SK-N-SH (cell line): ENCODE measurements at regions of chr7 and their contacts with region 1.

Region 1: GRCh38 chr7:3300651-3301378 is at the start of gene SDK1:
- DNase-seq: peak; percentile 98
- H3K4me3 ChIP-seq: peak within 1 kb of the TSS; percentile 62 to 63
- H3K27ac ChIP-seq: peak within 1 kb of the TSS in 1 of 2 experiments; percentile 47; a peak in 1 of 4 replicates
- H3K4me1 ChIP-seq: peaks cover 0 to 15% of the 10 kb centered on the region in 2 experiments; a peak in 2 of 4 replicates
- H3K27me3 ChIP-seq: peaks cover 12% of the 10 kb centered on the region; the same call in 1 of the 2 replicates
- CTCF ChIP-seq: peak; percentile 78
- EP300 ChIP-seq: 0 out of 4 replicates have a peak, but pooled peaks of 1 of the 2 experiments have one; percentile 7
- RAD21 ChIP-seq: peak; percentile 85
- polyA plus RNA-seq, gene SDK1: 0.96 and 1.2 TPM in 2 replicates

Region 2: DNA sequence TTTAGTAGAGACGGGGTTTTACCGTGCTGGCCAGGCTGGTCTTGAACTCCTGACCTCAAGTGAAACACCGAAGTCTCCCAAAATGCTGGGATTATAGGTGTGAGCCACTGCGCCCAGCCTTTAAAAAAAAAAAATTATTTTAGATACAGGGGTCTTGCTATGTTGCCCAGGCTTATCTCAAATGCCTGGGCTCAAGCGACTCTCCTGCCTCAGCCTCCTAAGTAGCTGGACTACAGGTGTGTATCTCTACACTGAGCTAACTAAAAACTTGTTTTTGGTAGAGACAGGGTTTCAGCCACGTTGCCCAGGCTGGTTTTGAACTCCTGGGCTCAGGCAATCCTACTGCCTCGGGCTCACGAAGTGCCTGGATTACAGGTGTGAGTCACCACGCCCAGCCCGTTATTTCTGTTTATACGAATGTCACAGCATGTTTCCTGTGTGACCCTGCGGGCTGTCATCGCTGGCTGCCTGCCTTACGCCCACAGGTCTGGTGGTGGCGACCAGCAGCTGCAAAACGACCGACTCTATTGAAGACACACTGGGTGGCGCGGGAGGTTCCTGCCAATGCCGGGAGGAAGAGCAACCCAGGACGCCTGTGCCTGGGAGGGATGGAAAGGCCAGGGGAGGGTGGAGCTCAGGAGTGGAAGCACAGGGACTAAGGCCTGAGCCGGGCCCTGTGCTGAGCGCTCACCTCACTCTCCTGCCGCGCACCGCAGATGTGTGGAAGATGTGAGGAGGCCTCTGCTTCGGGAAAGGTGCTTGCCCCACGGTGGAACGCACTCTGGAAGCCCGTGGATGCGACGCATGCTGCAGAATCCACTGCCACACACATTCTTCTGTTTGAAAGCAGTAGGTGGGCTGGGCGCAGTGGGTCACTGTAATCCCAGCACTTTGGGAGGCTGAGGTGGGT is 580.0 kb before region 1 on chr7:
- CTCF ChIA-PET with region 1: no interaction called
- POLR2A ChIA-PET with region 1: no interaction called
- DNase-seq: no peak
- H3K4me3 ChIP-seq: no peak overlapping the region
- H3K27ac ChIP-seq: no peak overlapping the region
- H3K4me1 ChIP-seq: peaks cover 0 to 25% of the 10 kb centered on the region in 2 experiments; a peak in 1 of 4 replicates
- H3K27me3 ChIP-seq: no peaks in the 10 kb centered on the region
- CTCF ChIP-seq: no peak
- EP300 ChIP-seq: no peak
- RAD21 ChIP-seq: 0 out of 2 replicates have a peak, but pooled peaks have one; percentile 14

Region 3: GRCh38 chr7:3028071-3028757 is 272.6 kb before region 1 on chr7:
- CTCF ChIA-PET with region 1: interaction called, 11 read pairs
- POLR2A ChIA-PET with region 1: no interaction called
- DNase-seq: peak; percentile 58
- H3K4me3 ChIP-seq: no peak overlapping the region; a peak in 1 of 4 replicates
- H3K27ac ChIP-seq: peak overlapping the region in 1 of 2 experiments; percentile 99; a peak in 2 of 4 replicates
- H3K4me1 ChIP-seq: peaks cover 0 to 26% of the 10 kb centered on the region in 2 experiments; a peak in 2 of 4 replicates
- H3K27me3 ChIP-seq: no peaks in the 10 kb centered on the region
- CTCF ChIP-seq: no peak
- EP300 ChIP-seq: peak in 1 of 2 experiments; percentile 48; a peak in 1 of 4 replicates
- RAD21 ChIP-seq: peak; percentile 16; the same call in 1 of the 2 replicates

Region 4: DNA sequence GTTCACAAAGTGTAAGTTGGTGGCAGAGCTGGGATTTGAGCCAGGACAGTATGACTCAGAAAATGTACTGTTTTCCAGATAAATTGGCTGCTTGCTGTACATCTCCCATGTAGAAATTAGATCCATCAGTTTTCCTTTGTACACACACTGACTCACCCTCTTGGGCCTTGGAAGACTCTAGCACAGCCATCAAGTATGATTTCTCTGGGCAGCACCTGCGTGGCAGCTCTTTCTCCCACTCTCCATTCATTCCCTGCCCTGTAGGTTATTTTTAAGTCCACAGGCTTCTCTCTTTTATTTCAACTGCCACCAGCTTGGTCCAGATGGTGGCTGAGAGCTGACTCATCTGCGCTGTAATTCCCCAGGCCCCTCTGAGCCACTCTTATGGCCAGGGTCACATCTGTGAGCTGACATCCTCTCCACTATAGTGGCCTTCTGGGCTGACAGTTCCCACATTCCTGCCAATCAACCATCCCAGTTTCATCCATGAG is 28.1 kb before region 1 on chr7:
- CTCF ChIA-PET with region 1: interaction called, 13 read pairs
- POLR2A ChIA-PET with region 1: no interaction called
- DNase-seq: no peak
- H3K4me3 ChIP-seq: no peak overlapping the region
- H3K27ac ChIP-seq: no peak overlapping the region
- H3K4me1 ChIP-seq: peaks cover 0 to 5% of the 10 kb centered on the region in 2 experiments; a peak in 1 of 4 replicates
- H3K27me3 ChIP-seq: no peaks in the 10 kb centered on the region
- CTCF ChIP-seq: no peak
- EP300 ChIP-seq: no peak
- RAD21 ChIP-seq: no peak

Region 5: GRCh38 chr7:3289996-3290395 is 10.8 kb before region 1 on chr7:
- CTCF ChIA-PET with region 1: interaction called, 36 read pairs
- POLR2A ChIA-PET with region 1: interaction called, 6 read pairs
- DNase-seq: no peak
- H3K4me3 ChIP-seq: no peak overlapping the region
- H3K27ac ChIP-seq: no peak overlapping the region
- H3K4me1 ChIP-seq: no peaks in the 10 kb centered on the region
- H3K27me3 ChIP-seq: no peaks in the 10 kb centered on the region
- CTCF ChIP-seq: no peak
- EP300 ChIP-seq: no peak
- RAD21 ChIP-seq: no peak

Region 6: DNA sequence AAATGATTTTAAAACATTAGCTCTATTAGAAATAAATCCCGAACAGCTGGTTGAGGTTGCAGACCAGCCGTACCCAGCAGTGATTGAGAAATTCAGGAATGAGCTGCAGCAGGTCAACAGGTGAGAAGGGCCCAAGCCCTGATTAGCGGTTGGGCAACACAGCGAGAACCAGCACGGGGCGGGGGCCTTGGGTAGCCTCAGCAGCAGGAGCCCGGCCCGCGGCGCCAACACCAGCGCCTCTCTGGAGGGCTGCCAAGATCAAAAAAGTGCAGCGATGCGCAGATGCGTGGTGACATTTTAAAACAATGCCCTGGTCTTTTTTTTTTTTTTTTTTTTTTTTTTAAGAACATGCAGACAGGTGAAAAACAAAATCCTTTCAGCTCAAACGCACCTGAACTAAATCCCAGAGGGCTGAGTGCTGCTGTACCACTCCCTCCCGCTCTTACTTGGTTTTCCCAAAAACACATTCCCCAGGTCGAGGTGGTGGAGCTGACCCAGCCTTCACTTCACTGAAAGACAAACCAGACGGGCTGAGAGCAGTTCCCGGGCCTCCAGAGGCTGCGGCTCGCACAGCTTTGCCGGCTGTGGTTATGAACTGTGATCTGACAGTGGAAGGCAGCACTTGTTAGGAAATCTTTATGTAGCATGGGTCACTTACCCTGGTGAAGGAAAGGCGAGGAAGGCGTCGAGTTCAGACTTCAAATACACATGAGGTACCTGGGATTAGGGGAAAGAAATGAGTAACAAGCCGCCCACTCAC is 579.6 kb after region 1 on chr7:
- CTCF ChIA-PET with region 1: interaction called, 10 read pairs
- POLR2A ChIA-PET with region 1: no interaction called
- DNase-seq: peak; percentile 74
- H3K4me3 ChIP-seq: peak overlapping the region in 1 of 2 experiments; percentile 24; a peak in 1 of 4 replicates
- H3K27ac ChIP-seq: peak overlapping the region in 1 of 2 experiments; percentile 68; a peak in 1 of 4 replicates
- H3K4me1 ChIP-seq: peaks cover 0 to 19% of the 10 kb centered on the region in 2 experiments; a peak in 2 of 4 replicates
- H3K27me3 ChIP-seq: no peaks in the 10 kb centered on the region
- CTCF ChIP-seq: no peak
- EP300 ChIP-seq: no peak
- RAD21 ChIP-seq: no peak

Region 7: DNA sequence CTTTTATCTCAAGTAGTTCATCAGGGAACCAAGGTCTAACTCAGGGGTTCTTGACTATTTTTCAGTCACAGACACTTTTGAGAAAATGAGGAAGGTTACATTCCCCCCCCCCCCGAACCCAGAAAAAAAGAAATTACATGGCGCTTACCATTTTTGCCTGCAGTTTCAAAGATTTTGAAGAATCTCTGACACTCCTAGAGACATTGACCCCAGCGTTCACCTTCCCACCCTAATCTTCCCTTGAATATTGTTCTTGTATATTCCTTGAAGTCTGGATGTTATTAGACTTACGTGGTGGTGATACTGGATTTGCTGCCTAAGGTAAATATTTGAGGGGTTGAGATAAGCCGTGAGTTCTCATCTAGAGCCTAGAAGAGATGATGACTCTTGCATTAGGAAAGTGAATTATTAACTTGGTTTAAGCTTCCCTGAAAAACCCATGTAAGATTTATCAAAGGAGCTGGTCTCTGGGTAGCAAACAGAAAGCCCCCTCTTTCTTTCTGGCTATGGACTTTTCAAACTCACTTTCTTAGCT is 1135.6 kb after region 1 on chr7:
- CTCF ChIA-PET with region 1: no interaction called
- POLR2A ChIA-PET with region 1: no interaction called
- DNase-seq: no peak
- H3K4me3 ChIP-seq: no peak overlapping the region
- H3K27ac ChIP-seq: no peak overlapping the region
- H3K4me1 ChIP-seq: no peaks in the 10 kb centered on the region
- H3K27me3 ChIP-seq: no peaks in the 10 kb centered on the region
- CTCF ChIP-seq: no peak
- EP300 ChIP-seq: no peak
- RAD21 ChIP-seq: no peak